Testis (tissue), 5 donors: ENCODE measurements at regions of chr11 and their contacts with region 1.

Region 1: DNA sequence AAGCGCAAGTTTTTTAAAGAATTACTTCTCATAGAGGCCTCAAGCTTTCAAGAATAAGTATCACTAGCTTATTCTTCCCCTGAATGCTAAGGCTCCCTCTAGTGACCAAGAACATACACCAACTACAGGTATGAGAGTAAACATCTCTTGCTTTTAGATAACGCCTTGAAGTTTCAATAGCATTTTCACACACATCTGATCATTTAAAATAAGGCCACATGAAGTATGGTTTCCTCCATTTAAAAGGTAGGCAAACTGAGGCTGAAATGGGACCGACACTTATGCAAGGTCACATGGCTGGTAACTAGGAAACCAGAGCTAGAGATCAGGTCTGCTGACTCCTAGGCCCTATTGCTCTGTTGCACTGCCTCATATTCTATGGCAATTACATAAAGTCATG is 66.5 kb downstream of the CCDC34 start:
- DNase-seq: no peak
- H3K4me3 ChIP-seq: no peak overlapping the region
- H3K27ac ChIP-seq: no peak overlapping the region
- H3K4me1 ChIP-seq: peaks cover 4% of the 10 kb centered on the region
- H3K27me3 ChIP-seq: no peaks in the 10 kb centered on the region
- CTCF ChIP-seq: peak; percentile 30 to 51 (median 35)
- POLR2A ChIP-seq: no peak

Region 2: GRCh38 chr11:27183672-27184457 is 112.6 kb before region 1 on chr11:
- intact Hi-C with region 1: loop called (anchors 5 kb)
- DNase-seq: peak; percentile 84
- H3K4me3 ChIP-seq: no peak overlapping the region
- H3K27ac ChIP-seq: no peak overlapping the region
- H3K4me1 ChIP-seq: peaks cover 14% of the 10 kb centered on the region
- H3K27me3 ChIP-seq: no peaks in the 10 kb centered on the region
- CTCF ChIP-seq: peak; percentile 67 to 81 (median 73)
- POLR2A ChIP-seq: no peak

Region 3: DNA sequence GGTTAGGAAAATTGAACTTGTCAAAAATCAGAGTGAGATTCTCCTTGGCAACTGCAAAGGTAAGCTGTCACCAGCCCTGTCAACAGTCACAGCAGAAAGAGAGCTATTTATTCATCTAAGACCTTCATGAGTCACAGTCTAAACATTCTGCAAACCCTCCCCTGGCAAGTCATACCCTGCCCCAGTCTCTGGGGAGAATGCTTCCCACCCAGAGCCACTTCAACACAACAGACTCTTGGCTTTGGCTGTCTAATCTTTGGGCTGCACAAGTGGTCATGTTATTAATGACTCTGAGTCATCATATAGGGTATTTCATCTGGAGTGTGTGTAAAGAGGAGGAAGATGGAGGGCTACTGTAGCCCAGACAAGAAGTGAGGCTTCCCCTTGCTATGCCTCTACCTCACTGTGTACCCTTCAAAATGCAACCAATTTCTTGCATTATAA is 86.9 kb before region 1 on chr11:
- intact Hi-C with region 1: loop called (anchors 10 kb)
- DNase-seq: no peak
- H3K4me3 ChIP-seq: no peak overlapping the region
- H3K27ac ChIP-seq: no peak overlapping the region
- H3K4me1 ChIP-seq: peaks cover 19% of the 10 kb centered on the region
- H3K27me3 ChIP-seq: no peaks in the 10 kb centered on the region
- CTCF ChIP-seq: no peak
- POLR2A ChIP-seq: no peak

Region 4: GRCh38 chr11:27423125-27423524 is 126.6 kb after region 1 on chr11:
- intact Hi-C with region 1: no loop called
- DNase-seq: no peak
- H3K4me3 ChIP-seq: no peak overlapping the region
- H3K27ac ChIP-seq: no peak overlapping the region
- H3K4me1 ChIP-seq: peaks cover 5% of the 10 kb centered on the region
- H3K27me3 ChIP-seq: no peaks in the 10 kb centered on the region
- CTCF ChIP-seq: no peak
- POLR2A ChIP-seq: no peak

Region 5: GRCh38 chr11:27485930-27486773 is 189.7 kb after region 1 on chr11:
- intact Hi-C with region 1: loop called (anchors 10 kb)
- DNase-seq: peak; percentile 47
- H3K4me3 ChIP-seq: no peak overlapping the region
- H3K27ac ChIP-seq: no peak overlapping the region
- H3K4me1 ChIP-seq: no peaks in the 10 kb centered on the region
- H3K27me3 ChIP-seq: no peaks in the 10 kb centered on the region
- CTCF ChIP-seq: peak; percentile 87 to 94 (median 90)
- POLR2A ChIP-seq: no peak

Region 6: DNA sequence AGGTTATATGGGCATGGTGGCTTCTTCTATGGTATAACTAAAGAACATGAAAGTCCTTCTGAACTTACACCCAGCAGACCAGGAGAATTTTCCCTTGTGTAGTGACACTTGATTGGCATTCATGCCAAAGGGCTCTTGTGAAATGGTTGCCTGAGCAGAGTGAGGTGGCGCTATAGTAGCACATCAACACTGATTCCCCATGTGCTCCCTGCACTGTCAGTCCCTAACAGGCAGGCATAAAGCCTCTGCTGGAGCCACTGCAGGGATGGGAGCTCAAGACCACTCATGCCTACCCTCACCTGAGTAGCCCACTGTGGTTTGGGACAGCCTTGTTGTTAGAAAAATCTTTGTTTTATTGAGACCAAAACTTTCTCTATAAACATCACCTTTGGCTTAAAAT is 302.7 kb after region 1 on chr11:
- intact Hi-C with region 1: no loop called
- DNase-seq: no peak
- H3K4me3 ChIP-seq: no peak overlapping the region
- H3K27ac ChIP-seq: no peak overlapping the region
- H3K4me1 ChIP-seq: no peaks in the 10 kb centered on the region
- H3K27me3 ChIP-seq: no peaks in the 10 kb centered on the region
- CTCF ChIP-seq: no peak
- POLR2A ChIP-seq: no peak